GM13976 (cell line): ENCODE measurements at regions of chr1 and their contacts with region 1.

Region 1: GRCh38 chr1:147292631-147293251 is 50.3 kb downstream of the CHD1L start:
- DNase-seq: no peak
- CTCF ChIP-seq: no peak

Region 2: DNA sequence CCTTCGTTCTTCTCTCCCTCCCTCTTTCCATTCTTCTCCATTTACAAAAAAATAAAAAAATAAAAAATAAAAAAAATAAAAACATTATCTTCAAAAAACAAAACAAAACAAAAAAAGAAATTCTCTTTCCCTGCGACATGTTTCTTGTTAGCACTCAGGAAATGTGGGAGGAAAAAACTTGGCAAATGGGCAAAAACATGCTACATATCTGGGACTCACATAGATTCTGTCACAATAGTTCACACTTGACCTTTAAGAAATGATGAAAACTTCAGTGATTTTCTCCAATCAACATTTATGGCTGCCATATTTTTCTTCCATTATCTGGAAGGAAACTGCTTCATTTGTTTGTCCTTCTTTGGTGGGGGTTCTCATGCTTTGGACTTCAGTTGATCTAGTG is 229.8 kb before region 1 on chr1:
- in situ Hi-C with region 1: no loop called
- DNase-seq: no peak
- CTCF ChIP-seq: no peak

Region 3: DNA sequence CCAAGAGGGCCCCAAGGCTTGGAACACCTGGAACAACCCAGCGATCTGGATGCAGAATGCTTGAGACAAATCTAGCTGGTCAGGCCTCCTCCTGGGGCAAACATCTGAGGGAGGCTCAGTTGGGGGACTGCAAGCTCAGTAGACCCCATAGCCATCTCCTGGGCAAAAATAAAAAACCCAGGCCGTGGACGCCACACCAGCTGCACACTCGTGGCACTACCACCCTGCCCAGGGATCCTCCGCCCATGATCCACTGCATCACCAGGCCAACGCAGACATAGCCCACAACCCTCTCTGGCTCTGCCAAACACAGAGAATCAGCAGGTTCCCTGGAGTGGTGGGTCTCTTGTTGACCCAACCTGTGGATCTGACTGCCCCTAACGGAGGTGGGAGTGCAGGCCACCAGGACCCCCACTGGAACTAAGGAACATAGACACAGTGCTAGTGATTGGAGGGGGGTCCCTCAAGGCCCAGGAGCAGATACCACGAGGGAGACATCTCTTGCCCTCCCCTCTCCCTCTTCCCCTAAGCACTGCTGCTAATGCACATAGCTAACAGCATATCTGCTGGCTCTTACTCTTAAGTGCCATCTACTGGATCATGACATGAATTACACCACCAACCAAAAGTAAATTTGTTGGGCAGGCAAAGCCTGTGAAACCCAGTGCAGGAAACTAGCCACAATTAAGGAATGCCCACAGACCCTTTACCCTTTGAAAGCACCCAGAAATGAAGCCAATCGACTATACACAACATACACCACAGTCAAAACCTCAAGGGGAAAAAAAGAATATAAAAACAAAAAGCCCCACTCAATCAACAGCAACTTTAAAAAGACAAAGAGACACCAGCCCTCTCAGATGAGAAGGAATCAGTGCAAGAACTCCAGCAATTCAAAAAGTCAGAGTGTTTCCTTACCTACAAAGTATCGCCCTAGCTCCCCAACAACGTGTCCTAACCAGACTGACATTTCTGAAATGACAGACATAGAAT is 97.1 kb after region 1 on chr1:
- in situ Hi-C with region 1: loop called (anchors 25 kb)
- DNase-seq: peak; percentile 69
- CTCF ChIP-seq: peak; percentile 49

Region 4: DNA sequence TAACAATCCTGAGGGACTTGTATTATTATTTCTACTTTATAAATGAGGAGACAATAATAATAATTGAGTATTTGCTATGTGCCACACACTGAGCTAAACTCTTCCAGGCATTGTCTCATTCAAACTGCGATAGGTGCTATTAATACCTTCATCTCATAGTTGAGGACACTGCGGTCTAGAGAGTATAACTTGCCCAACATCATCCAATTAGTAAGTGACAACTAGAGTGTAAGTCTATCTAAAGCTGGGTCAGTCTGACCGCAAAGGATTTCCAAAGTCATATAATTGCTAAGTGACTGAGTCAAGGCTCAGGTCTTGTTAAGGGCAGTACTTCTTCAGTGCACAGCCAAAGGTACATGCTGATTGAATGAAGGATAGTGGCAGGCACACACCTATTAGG is 258.3 kb after region 1 on chr1:
- in situ Hi-C with region 1: no loop called
- DNase-seq: no peak
- CTCF ChIP-seq: no peak

Region 5: DNA sequence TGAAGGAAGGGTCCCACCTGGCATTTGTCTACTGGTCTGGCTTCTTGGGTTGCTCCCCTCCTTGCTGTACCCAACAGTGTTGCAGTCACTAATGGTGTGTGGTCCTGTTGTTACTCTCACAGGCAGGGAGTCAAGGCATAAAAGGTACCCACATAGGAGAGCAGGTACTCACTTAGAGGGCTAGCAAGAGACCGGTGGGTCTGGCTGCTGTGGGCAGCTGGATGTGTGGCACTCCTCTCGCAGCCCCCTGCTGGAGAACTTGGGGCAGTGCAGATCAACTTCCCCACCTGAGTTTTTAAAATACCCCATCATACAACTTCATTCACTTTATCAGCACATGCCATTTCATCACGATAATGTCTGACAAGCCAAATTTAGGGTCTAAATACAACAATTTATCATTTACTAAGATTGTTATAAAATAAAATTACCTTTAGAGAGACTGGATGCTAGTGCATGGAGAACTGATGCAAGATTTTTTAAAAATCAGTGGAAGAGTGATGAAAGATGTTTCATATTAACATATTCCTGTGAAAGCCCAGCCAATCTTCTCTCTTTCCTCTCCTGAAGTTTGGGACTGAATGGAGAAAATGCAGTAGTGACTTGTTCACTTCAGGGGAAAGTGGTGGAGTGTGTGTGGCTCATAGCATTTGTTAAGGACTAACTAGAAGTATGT is 334.8 kb after region 1 on chr1:
- in situ Hi-C with region 1: no loop called
- DNase-seq: peak; percentile 84
- CTCF ChIP-seq: peak; percentile 76